Sciatic nerve (tissue), 2 donors: ENCODE measurements at regions of chr10 and their contacts with region 1.

Region 1: DNA sequence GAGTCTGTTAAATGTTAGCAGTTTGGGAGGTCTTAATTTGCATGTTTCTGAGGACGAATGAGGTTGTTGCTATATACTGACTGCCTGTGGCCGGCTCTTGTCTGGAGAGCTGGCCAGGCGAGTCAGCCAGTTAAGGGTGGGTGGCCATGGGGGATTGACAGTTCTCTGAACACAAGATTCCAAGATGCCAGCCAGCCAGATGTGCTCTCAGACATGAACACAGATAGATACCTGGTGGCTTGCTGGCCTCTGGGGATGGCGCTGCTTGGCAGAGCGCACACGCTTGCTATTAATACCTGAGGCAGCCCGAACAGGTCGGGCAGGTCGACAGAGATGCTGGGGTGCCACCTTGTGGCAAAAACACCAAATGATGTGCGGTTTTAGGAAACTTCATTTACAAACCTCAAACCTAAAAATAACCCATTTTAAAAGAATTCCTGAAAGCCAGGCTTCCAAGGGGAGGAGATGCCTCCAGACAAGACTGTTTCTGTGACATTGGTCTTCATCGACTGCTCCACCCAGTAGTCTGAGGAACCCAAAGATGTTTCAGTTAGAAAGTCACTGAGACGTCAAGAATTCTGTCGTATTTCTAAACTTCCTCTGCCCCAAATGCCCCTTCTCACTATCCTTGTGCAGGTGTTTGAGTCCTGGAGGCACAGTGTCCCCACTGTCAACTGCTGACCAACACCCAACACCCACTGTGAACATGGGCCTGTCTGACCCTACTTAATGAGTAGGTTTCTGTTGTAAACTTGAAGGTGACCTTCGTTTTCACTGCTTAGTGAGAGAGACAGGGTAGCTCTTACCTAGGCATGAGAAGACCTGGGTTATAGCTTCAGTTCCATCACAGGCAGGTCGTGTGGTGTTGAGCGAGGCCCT is 123.4 kb downstream of the NT5C2 start:
- DNase-seq: no peak
- ATAC-seq: peak; percentile 58

Region 2: DNA sequence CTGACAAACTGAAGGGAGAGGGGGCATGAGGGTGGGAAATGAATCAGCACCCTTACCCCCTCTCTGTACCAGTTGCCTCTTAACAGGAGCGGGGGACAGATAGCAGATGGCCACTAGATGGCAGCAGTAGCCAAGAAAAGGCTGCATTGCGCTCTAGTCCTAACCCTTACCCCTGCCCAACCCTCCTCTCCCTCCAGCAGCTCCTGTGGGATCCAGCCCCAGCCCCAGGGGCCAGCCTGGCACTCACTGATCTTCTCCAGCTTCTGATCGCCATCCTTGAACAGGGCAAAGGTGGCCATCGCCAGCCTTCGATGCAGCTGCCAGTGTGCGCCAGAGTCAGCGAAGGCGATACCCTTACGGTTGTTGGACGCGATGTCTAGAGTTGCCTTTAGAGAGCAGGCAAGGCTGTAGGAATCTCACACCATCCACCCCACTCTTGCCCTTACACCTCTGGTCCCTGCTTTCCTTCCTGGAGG is 234.6 kb before region 1 on chr10:
- intact Hi-C with region 1: loop called (anchors 10 kb)
- DNase-seq: peak; percentile 88
- ATAC-seq: peak; percentile 94

Region 3: DNA sequence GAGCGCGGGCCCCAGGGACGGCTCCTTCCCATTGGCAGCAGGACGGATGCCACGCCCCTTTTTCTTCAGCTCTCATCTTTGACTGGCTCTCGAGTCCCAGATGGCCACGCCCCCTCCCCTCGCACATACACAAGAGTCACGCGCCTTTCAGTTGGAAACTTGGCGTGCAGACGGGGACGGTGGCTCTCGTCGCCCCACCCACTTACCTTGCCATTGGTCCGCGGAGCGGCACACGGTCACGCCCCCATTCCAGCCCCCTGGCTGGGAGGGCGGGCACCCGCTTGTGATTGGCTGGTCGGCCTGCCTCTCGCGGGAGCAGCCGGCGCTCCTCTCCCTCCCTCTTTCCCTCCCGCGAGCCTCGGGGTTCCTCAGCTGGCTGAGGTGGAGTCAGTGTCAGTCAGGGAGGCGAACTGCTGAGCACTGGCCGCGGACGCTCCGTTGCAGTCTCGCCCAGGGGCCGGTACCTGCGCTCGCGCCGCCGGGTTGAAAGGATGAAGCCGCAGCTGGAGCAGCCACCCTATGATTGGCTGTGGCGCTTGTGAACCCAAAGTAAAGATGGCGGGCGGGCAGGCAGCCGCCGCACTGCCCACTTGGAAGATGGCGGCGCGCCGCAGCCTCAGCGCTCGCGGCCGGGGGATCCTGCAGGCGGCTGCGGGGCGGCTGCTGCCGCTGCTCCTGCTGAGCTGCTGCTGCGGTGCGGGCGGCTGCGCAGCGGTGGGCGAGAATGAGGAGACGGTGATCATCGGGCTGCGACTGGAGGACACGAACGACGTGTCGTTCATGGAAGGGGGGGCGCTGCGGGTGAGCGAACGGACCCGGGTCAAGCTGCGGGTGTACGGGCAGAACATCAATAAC is 151.5 kb before region 1 on chr10 and contains the start of gene CNNM2:
- intact Hi-C with region 1: loop called (anchors 2 kb)
- DNase-seq: peak; percentile 100
- ATAC-seq: peak; percentile 99
- total RNA-seq, gene CNNM2: 11.1 TPM